HEK293 (cell line): ENCODE measurements at regions of chr17 and their contacts with region 1.

Region 1: GRCh38 chr17:8275421-8276290 is 12.8 kb upstream of the RANGRF start:
- H3K4me3 ChIP-seq: no peak overlapping the region
- H3K27ac ChIP-seq: no peak overlapping the region
- H3K4me1 ChIP-seq: no peaks in the 10 kb centered on the region
- CTCF ChIP-seq: no peak

Region 2: DNA sequence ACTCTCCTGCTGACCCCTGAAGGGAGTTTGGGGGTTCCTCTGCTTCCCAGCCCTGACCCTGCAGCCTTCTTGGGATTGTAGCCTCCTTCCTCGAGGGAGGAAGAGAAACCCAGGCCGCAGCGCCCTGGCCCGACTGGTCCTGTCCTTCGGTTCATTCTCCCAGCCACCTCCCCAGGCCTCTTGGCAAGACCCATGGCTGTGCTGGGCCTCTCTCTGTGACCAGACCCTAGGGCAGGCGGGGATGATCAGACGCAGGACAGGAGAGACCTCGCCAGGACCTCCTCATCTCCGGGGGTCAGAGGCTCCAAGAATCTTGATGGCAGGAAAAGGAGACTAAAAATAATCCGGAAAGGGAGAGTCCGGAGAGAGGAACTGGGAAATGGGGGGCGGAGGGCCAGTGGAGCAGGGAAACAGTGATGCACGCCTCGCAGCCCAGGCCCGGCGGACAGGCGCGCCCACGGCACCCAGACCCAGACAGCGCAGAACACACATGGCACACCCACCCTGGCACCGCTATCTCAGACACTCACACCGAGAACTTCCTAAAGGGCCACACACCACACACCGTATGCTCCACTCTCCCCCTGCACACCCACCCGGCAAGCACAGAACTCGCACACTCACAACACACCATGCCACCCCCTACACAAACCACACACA is 35.6 kb after region 1 on chr17:
- CTCF ChIA-PET with region 1: no interaction called
- POLR2A ChIA-PET with region 1: interaction called, 15 read pairs
- H3K4me3 ChIP-seq: no peak overlapping the region
- H3K27ac ChIP-seq: no peak overlapping the region
- H3K4me1 ChIP-seq: no peaks in the 10 kb centered on the region
- CTCF ChIP-seq: no peak